ENCODE measurements at regions of chr12 and their contacts with region 1.

Region 1: DNA sequence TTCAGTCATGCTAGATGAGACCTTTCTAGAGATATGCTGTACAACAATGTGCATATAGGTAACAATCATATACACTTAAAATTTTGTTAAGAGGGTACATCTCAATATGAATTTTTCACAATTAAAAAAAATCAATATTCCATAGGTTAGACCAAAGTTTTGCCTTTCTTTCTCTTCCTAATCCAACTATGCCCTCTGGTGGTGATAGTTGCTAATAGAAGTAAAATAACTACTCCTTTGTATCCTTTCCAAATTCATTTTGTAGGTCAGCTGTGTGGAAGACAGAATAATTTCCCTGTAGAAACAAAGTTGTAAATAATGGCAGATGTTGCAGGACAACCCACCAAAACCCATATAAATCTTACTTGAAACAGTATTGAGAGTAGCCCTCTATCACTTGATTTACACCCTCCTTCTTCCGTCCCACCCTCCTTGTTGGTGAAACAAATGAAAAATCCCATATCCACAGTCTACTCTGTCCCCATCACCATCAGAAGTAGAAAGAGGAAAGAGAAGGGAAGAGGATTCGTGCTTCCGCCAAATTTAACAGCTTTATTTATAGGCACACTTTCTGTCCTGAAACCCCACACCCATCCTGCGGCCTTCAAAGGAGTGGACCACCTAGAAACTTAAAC is 34.2 kb upstream of the KICS2 start:
- DNase-seq: peak; percentile 61
- H3K4me3 ChIP-seq: no peak overlapping the region
- H3K27ac ChIP-seq: no peak overlapping the region
- H3K4me1 ChIP-seq: no peaks in the 10 kb centered on the region
- CTCF ChIP-seq: peak; percentile 93

Region 2: GRCh38 chr12:63103494-63104131 is 1152.7 kb before region 1 on chr12:
- CTCF ChIA-PET with region 1: no interaction called
- POLR2A ChIA-PET with region 1: no interaction called
- intact Hi-C with region 1: loop called (anchors 5 kb)
- DNase-seq: peak; percentile 20
- H3K4me3 ChIP-seq: no peak overlapping the region
- H3K27ac ChIP-seq: no peak overlapping the region
- H3K4me1 ChIP-seq: no peaks in the 10 kb centered on the region
- CTCF ChIP-seq: peak; percentile 89

Region 3: DNA sequence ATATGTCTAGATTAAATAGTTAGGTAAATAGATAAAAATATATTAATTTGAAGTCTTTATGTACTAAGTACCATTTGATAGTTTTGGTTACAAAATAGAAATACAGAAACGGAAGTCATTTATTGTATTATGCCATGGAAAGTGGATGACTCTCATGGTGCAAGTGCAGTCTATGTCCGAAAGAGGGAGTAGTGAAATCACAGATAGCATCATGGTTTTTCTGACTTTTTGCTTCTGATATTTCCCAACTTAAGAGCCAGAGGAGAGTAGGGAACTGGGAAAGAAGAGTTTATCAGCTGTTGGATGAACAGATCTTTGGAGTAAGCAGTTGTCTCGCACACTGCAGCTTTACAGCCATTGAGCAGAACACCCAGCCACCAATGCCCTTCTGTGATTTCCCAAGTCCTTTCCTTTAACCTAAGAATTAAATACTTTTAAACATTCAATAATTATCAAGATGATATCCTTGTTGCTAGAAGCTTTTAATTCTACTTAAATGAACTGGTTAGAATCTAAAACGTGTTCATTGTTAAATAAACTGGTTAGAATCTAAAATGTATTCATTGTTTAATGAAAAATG is 430.2 kb before region 1 on chr12:
- CTCF ChIA-PET with region 1: no interaction called
- POLR2A ChIA-PET with region 1: no interaction called
- intact Hi-C with region 1: loop called (anchors 1 kb)
- DNase-seq: peak; percentile 36
- H3K4me3 ChIP-seq: no peak overlapping the region
- H3K27ac ChIP-seq: no peak overlapping the region
- H3K4me1 ChIP-seq: no peaks in the 10 kb centered on the region
- CTCF ChIP-seq: peak; percentile 90

Region 4: GRCh38 chr12:63843721-63844390 is 412.4 kb before region 1 on chr12:
- CTCF ChIA-PET with region 1: no interaction called
- POLR2A ChIA-PET with region 1: no interaction called
- intact Hi-C with region 1: loop called (anchors 1 kb)
- DNase-seq: peak; percentile 82
- H3K4me3 ChIP-seq: peak overlapping the region; percentile 61
- H3K27ac ChIP-seq: no peak overlapping the region
- H3K4me1 ChIP-seq: no peaks in the 10 kb centered on the region
- CTCF ChIP-seq: peak; percentile 77

Region 5: DNA sequence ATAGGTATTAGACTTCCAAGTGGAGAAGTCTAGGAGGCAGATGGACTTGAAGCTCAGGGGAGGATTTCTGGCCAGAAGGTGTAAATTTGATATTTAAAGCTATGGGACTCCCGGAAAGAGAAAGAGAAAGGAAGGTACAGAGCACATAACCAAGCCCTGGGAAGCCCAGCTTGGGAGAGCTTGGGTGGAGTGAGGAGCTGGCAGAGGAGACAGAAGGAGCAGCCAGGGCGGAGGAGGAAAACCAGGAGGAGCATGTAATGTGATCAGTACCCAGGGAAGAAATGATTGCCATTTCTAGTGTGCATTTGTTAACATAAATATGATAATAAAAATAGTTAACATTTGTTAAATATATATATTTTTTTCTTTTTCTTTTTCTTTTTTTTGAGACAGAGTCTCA is 101.6 kb before region 1 on chr12:
- CTCF ChIA-PET with region 1: no interaction called
- POLR2A ChIA-PET with region 1: no interaction called
- intact Hi-C with region 1: loop called (anchors 10 kb)
- DNase-seq: no peak
- H3K4me3 ChIP-seq: no peak overlapping the region
- H3K27ac ChIP-seq: no peak overlapping the region
- H3K4me1 ChIP-seq: no peaks in the 10 kb centered on the region
- CTCF ChIP-seq: no peak

Region 6: GRCh38 chr12:64207453-64207852 is 48.8 kb before region 1 on chr12:
- CTCF ChIA-PET with region 1: no interaction called
- POLR2A ChIA-PET with region 1: interaction called, 10 read pairs
- intact Hi-C with region 1: no loop called
- DNase-seq: no peak
- H3K4me3 ChIP-seq: no peak overlapping the region
- H3K27ac ChIP-seq: no peak overlapping the region
- H3K4me1 ChIP-seq: no peaks in the 10 kb centered on the region
- CTCF ChIP-seq: no peak

Region 7: DNA sequence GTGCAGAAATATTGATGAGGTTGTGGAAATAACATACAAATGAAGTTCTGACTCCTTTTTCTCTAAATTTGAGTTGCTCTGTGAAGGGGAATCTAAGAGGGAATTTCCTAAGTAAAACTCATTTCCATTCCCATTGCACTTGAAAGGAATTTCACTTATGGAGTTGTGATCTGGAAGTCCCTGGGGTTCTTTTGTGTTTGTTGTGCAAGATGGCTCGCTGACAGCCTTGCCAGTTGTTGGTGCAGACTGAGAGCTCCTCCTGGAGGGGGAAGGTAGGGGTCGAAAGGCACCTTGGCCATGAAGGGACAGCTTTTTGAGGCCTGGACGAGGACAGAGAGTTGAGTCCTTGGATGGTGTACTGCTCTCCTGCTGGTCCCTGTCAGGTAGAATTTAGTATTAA is 62.3 kb after region 1 on chr12:
- CTCF ChIA-PET with region 1: no interaction called
- POLR2A ChIA-PET with region 1: no interaction called
- intact Hi-C with region 1: no loop called
- DNase-seq: no peak
- H3K4me3 ChIP-seq: no peak overlapping the region
- H3K27ac ChIP-seq: no peak overlapping the region
- H3K4me1 ChIP-seq: no peaks in the 10 kb centered on the region
- CTCF ChIP-seq: no peak

Measured in OCI-LY7 (cell line).